Activated T-helper 1 cell treated with anti-CD3 and anti-CD28 coated beads, Interleukin-12 subunit alpha, Interleukin-12 subunit beta, Interleukin-2, Interleukin-4 antibody, amounts not matched to agents 30 ng/mL and 10 ng/mL and 1 ng/mL, durations not matched to agents 14 hours and 24 hours and 36 hours (primary cell): ENCODE measurements at regions of chr7 and their contacts with region 1.

Region 1: GRCh38 chr7:37448636-37449361 is at the start of gene ELMO1:
- DNase-seq: peak; percentile 75
- H3K4me3 Mint-ChIP-seq: peak within 1 kb of the TSS; percentile 93
- H3K27ac Mint-ChIP-seq: peak within 1 kb of the TSS; percentile 97
- H3K4me1 Mint-ChIP-seq: peaks cover 55% of the 10 kb centered on the region
- H3K27me3 Mint-ChIP-seq: peaks cover 7% of the 10 kb centered on the region
- total RNA-seq, gene ELMO1: 113 and 119 TPM in 2 replicates

Region 2: GRCh38 chr7:36389371-36390198 is 1059.2 kb before region 1 on chr7 and contains the start of gene ANLN:
- intact Hi-C with region 1: loop called (anchors 1 kb)
- DNase-seq: peak; percentile 84
- H3K4me3 Mint-ChIP-seq: peak within 1 kb of the TSS; percentile 86
- H3K27ac Mint-ChIP-seq: peak within 1 kb of the TSS; percentile 78
- H3K4me1 Mint-ChIP-seq: peaks cover 37% of the 10 kb centered on the region
- H3K27me3 Mint-ChIP-seq: peaks cover 12% of the 10 kb centered on the region
- total RNA-seq, gene ANLN: 23.8 and 31.0 TPM in 2 replicates

Region 3: DNA sequence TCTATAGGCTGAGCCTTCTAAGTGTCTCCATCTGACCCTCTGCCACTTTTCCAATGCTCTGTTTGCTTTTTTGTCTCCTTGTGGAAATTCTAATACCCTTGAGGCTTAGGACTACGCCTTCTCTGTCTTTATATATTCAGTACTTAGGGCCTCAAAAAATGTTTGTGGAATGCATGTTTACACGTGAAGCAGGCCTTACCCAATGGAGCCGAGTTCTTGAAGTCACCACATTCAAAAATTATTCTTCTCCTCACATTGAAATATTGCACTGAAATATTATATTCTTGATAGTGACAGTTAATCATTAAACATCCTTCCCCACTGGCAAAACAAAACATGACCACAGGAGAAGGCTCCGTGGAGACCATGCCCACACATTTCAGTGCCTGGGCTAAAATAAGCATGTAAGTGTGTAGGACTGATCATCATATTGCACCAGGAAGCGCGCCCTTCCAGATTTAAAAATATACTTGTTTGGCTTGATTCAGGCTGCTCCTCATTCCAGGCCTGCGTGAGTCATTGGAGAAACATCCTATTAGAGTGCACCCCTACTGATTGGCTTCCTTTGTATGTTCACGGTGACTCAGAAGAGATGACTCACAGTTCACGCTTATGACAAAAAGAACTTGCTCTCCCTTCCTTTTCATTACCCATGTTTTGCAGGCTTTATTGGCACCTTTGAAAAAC is 417.1 kb before region 1 on chr7:
- intact Hi-C with region 1: loop called (anchors 10 kb)
- DNase-seq: peak; percentile 19
- H3K4me3 Mint-ChIP-seq: no peak overlapping the region
- H3K27ac Mint-ChIP-seq: peak overlapping the region; percentile 69
- H3K4me1 Mint-ChIP-seq: peaks cover 59% of the 10 kb centered on the region
- H3K27me3 Mint-ChIP-seq: no peaks in the 10 kb centered on the region

Region 4: DNA sequence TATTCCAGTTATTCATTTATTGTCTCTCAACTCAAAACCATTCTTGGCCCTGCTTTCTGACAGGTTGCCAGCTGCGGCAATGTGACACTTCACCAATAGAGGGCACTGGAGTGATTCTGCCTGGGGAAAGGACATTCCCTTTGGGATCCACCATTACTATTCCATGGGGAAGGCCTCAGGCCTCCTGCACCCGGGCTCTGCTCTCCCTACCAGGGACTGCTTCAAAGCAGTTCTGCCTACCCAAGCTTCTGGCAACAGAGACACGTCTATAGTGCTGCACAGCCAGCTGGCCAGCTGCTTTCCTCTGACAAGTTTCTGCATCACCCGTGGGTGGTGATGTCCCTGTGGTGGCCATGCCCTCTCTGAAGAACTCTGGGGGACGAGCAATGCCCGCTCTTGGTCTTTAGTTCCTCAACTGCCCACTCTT is 164.0 kb before region 1 on chr7:
- intact Hi-C with region 1: loop called (anchors 1 kb)
- DNase-seq: no peak
- H3K4me3 Mint-ChIP-seq: no peak overlapping the region
- H3K27ac Mint-ChIP-seq: no peak overlapping the region
- H3K4me1 Mint-ChIP-seq: peaks cover 48% of the 10 kb centered on the region
- H3K27me3 Mint-ChIP-seq: no peaks in the 10 kb centered on the region

Region 5: GRCh38 chr7:37395618-37396259 is 53.1 kb before region 1 on chr7:
- intact Hi-C with region 1: loop called (anchors 1 kb)
- DNase-seq: no peak
- H3K4me3 Mint-ChIP-seq: no peak overlapping the region
- H3K27ac Mint-ChIP-seq: peak overlapping the region; percentile 71
- H3K4me1 Mint-ChIP-seq: peaks cover 26% of the 10 kb centered on the region
- H3K27me3 Mint-ChIP-seq: no peaks in the 10 kb centered on the region

Region 6: GRCh38 chr7:37495574-37496184 is 46.9 kb after region 1 on chr7:
- intact Hi-C with region 1: loop called (anchors 2 kb)
- DNase-seq: no peak
- H3K4me3 Mint-ChIP-seq: no peak overlapping the region
- H3K27ac Mint-ChIP-seq: no peak overlapping the region
- H3K4me1 Mint-ChIP-seq: peaks cover 10% of the 10 kb centered on the region
- H3K27me3 Mint-ChIP-seq: no peaks in the 10 kb centered on the region

Region 7: DNA sequence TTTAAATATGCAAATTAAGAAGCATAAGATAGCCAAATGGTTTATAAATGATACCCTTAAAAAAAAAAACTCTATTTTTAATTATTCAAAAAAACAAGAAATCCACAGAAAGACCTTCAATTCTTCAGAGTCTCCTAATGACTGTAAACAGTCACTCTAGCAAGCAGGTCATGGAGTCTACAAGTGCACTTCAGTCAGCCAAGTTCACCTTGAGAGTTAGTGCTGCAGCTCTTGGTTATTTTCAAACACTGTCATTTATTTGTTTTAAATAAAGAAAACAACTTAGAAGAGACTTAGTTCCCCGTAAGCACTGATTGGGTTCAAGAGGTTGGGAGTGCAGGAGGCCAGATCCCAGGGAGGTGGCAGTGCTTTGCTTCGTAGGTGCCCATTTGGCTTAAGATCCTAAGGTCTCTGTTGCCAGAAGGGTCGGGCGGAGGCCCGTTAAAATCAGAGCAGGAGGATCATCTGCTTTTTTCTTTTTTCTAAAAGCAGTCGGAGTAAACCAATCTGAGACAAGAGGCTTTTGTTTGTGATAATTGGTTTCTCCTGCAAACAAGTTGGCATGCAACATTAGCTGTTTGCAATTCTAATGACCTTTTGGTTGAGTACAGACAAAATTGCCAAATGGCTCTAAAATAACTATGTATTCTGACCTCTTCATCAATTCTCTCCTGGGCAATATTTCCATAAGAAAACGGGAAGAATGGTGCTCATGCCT is 86.3 kb after region 1 on chr7:
- intact Hi-C with region 1: no loop called
- DNase-seq: no peak
- H3K4me3 Mint-ChIP-seq: no peak overlapping the region
- H3K27ac Mint-ChIP-seq: no peak overlapping the region
- H3K4me1 Mint-ChIP-seq: no peaks in the 10 kb centered on the region
- H3K27me3 Mint-ChIP-seq: peaks cover 21% of the 10 kb centered on the region